ENCODE measurements at regions of chr1 and their contacts with region 1.

Region 1: GRCh38 chr1:41516168-41517061 is 31.9 kb upstream of the EDN2 start:
- DNase-seq: peak; percentile 88 to 93 (median 92)
- H3K4me3 ChIP-seq: peak overlapping the region; percentile 28 to 70 (median 54)
- H3K27ac ChIP-seq: peak overlapping the region in 49 of 59 donors; percentile 11 to 91 (median 71)
- H3K27me3 ChIP-seq: no peaks in the 10 kb centered on the region
- CTCF ChIP-seq: peak; percentile 61 to 97 (median 92)

Region 2: DNA sequence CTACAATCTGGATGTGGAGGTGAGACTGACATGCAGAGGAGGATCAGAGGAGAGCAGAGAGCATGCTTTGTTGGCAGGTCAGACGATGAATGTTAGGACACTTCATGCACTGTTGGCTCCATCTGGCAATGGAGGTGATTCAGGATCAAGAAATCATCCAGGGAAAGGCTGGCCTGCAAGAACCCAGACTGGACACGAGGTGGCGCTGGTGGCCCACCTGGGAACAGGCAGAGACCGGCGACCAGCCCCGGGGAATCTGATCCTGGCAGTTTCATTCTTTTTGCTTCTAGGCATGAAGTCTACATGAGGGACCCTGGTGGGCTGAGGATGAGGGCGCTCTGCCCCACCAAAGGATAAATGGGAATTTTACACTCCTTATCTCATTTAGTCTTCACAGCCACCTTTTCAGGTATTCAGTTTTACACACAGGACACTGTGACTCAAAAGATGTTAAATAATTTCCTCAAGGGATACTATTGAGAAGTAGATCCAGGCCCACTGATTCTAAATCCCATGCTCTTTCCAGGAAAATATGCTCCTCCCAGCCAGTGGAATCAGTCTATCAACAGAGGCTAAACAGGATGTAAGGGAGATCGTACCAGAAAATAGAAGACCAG is 248.2 kb before region 1 on chr1:
- intact Hi-C with region 1: loop called in 1 of 2 experiments (anchors 10 kb)
- DNase-seq: peak; percentile 67 to 89 (median 80)
- H3K4me3 ChIP-seq: peak overlapping the region in 1 of 59 donors; percentile 17
- H3K27ac ChIP-seq: peak overlapping the region in 17 of 59 donors; percentile 3 to 60 (median 21)
- H3K27me3 ChIP-seq: no peaks in the 10 kb centered on the region
- CTCF ChIP-seq: peak; percentile 95 to 100 (median 99)

Region 3: GRCh38 chr1:41432481-41433280 is 83.7 kb before region 1 on chr1:
- intact Hi-C with region 1: loop called in 1 of 2 experiments (anchors 5 kb)
- DNase-seq: peak; percentile 28 to 88 (median 81)
- H3K4me3 ChIP-seq: peak overlapping the region in 9 of 59 donors; percentile 15 to 36 (median 19)
- H3K27ac ChIP-seq: peak overlapping the region in 40 of 59 donors; percentile 1 to 79 (median 46)
- H3K27me3 ChIP-seq: peaks cover 0 to 12% (median 0%) of the 10 kb centered on the region in 45 donors
- CTCF ChIP-seq: peak; percentile 47 to 97 (median 90)

Region 4: DNA sequence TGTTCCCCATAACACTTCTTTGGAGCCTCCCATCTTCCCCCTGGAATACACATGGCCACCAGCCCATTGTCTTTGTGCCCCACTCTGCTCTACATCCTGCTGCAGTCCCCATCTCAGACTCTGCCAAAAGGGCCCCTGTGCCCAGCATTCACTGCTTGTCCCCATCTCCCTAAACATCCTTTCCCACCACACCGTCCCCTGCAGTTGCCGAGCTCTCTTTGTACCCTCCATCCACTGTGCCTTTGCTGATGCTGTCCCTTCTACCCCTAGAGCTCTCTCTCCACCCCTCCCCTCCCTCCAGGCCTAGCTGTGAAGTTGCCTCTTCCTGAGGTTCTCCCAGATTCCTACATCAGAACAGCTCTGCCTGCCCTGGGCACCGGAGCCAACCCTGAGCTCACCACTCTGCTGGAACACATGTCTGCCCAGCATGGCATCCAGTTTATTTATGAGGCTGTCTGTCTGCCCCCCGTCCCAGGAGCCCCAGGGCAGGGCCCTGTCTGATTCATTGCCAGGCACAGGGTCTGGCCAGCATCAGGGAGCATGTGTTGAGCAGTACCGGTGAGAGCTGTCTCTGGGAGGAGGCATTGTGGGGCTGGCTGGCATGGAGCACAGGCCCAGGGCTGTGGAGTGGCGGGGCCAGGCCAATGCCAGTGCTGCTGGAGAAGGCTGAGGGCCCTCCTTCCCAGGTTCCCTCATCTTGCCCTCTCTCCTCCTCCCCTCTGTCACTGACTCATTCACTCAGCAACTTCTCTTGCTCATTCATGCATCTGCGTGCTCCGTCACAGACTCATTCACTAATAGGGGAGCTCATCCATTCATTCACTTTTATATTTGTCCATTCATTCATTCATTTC is 60.7 kb before region 1 on chr1:
- intact Hi-C with region 1: loop called in 1 of 2 experiments (anchors 2 kb)
- DNase-seq: peak in 4 of 10 donors; percentile 19 to 85 (median 32)
- H3K4me3 ChIP-seq: no peak overlapping the region
- H3K27ac ChIP-seq: peak overlapping the region in 17 of 59 donors; percentile 0 to 74 (median 26)
- H3K27me3 ChIP-seq: no peaks in the 10 kb centered on the region
- CTCF ChIP-seq: no peak

Region 5: DNA sequence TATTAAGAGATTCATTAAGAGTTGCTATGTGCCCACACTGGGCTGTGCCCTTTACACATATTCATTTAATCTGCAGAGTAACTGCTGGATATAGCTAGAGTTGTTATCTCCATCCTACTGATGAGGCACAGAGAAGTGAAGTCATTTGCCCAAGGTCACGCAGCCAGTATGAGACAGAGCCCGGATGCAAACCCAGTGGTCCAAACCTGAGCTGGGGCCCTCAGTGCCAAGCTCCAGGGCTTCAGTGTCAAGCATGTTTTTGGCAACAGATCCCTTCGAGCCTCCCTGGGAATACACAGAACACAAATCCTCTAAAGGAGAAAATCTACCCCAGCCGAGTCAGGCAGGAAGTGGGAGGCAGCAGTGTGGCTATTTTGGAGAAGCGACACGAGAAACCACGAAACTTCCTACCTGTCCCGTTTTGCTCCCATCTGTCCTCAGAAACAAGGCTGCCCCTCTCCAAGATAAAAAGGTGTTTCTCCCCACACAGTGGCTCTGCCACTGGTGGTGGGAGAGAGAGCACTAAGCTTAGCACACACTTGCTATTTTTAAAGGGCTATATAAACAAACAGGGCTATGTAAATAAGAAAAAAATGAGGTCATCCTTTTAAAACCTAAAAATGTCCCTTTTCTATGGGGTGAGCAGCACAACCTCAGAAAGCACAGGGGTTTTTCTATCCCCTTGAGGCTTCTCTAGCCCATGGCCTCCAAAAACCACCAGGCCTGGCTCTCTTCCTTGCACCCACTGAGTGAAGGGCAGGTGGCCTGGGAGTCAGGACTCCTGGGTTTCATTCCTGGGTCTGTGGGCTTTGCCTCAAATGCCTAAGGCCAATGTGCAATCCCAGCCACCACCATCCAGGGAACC is 106.7 kb after region 1 on chr1:
- intact Hi-C with region 1: loop called (anchors 5 to 10 kb)
- DNase-seq: no peak
- H3K4me3 ChIP-seq: peak overlapping the region in 1 of 59 donors; percentile 19
- H3K27ac ChIP-seq: peak overlapping the region in 3 of 59 donors; percentile 5 to 50 (median 33)
- H3K27me3 ChIP-seq: no peaks in the 10 kb centered on the region
- CTCF ChIP-seq: no peak

Region 6: DNA sequence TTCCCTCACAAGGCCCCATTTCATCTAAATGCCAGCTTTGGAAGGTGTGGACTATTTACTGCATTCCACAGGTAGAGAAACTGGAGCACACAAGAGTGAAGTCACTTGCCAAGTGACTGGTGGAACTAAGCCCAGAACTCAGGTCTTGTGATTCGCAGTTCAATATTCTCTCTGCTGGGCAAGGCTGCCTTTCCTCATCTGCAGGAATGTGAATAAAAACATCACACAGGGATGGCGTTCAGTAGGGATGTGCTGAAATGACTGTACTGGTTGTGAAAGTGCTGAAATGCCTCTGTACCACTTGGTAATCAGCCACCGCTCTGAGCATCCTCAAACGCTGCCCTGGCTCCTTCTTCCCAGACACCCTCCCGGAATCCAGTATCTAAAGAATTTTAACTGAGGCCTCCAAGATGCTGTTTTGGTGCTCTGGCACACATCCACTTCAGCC is 256.8 kb after region 1 on chr1:
- intact Hi-C with region 1: loop called (anchors 5 to 10 kb)
- DNase-seq: peak in 1 of 10 donors; percentile 18
- H3K4me3 ChIP-seq: no peak overlapping the region
- H3K27ac ChIP-seq: peak overlapping the region in 5 of 59 donors; percentile 11 to 33 (median 24)
- H3K27me3 ChIP-seq: no peaks in the 10 kb centered on the region
- CTCF ChIP-seq: no peak

Region 7: GRCh38 chr1:42070996-42071395 is 554.6 kb after region 1 on chr1:
- intact Hi-C with region 1: no loop called
- DNase-seq: no peak
- H3K4me3 ChIP-seq: no peak overlapping the region
- H3K27ac ChIP-seq: no peak overlapping the region
- H3K27me3 ChIP-seq: peaks cover 0 to 3% (median 0%) of the 10 kb centered on the region in 45 donors
- CTCF ChIP-seq: no peak